Right ventricle myocardium inferior (tissue), 1 donor: ENCODE measurements at regions of chr7 and their contacts with region 1.

Region 1: GRCh38 chr7:55593515-55594318 is 21.4 kb upstream of the VOPP1 start:
- DNase-seq: peak; percentile 87
- ATAC-seq: peak; percentile 59

Region 2: GRCh38 chr7:55432939-55433784 is 160.6 kb before region 1 on chr7:
- intact Hi-C with region 1: loop called (anchors 1 kb)
- DNase-seq: no peak
- ATAC-seq: no peak

Region 3: GRCh38 chr7:55509322-55509721 is 84.4 kb before region 1 on chr7:
- intact Hi-C with region 1: no loop called
- DNase-seq: no peak
- ATAC-seq: no peak

Region 4: GRCh38 chr7:55538538-55538937 is 55.2 kb before region 1 on chr7:
- intact Hi-C with region 1: no loop called
- DNase-seq: no peak
- ATAC-seq: no peak